MCF 10A (cell line): ENCODE measurements at regions of chr4 and their contacts with region 1.

Region 1: GRCh38 chr4:15457406-15458201 is 12.1 kb upstream of the CC2D2A start:
- DNase-seq: peak; percentile 44
- H3K4me3 Mint-ChIP-seq: no peak overlapping the region
- H3K27ac Mint-ChIP-seq: no peak overlapping the region
- H3K4me1 Mint-ChIP-seq: peaks cover 8% of the 10 kb centered on the region
- H3K27me3 Mint-ChIP-seq: peaks cover 18% of the 10 kb centered on the region
- CTCF ChIP-seq: peak; percentile 60

Region 2: DNA sequence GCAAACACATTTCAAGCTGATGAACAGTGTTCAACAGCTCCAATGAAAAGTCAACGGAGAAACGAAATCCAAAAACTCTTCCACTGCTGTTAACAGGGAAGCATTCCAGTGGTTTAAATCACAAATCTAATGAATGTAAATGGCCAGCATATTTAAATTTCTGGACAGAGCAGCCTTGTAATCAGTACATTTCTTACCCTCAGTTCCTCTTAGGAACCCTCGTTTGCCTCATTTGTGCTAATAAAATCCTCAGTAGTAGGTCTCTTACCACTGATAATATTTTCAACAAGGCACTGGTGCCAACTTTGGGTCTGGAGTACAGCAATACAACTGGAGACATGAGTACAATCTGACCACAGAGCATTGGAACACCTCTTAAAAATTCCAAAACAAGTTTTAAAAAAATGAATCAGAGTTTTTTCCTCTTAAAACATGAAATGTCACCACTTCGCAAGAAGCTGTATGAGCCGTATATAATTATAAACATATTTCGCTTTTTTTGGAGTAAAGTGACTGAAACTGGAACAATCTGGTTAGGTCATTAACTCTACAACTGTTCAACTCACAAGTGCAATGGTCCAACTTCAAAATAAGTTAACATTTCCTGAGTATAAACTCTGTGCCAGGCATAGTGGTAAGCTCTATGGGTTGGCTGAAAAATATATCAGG is 244.2 kb before region 1 on chr4:
- CTCF ChIA-PET with region 1: no interaction called
- POLR2A ChIA-PET with region 1: no interaction called
- intact Hi-C with region 1: no loop called
- DNase-seq: no peak
- H3K4me3 Mint-ChIP-seq: no peak overlapping the region
- H3K27ac Mint-ChIP-seq: no peak overlapping the region
- H3K4me1 Mint-ChIP-seq: no peaks in the 10 kb centered on the region
- H3K27me3 Mint-ChIP-seq: no peaks in the 10 kb centered on the region
- CTCF ChIP-seq: no peak

Region 3: GRCh38 chr4:15238720-15239119 is 218.9 kb before region 1 on chr4:
- CTCF ChIA-PET with region 1: interaction called, 122 read pairs
- POLR2A ChIA-PET with region 1: interaction called, 8 read pairs
- intact Hi-C with region 1: loop called (anchors 1 kb)
- DNase-seq: peak; percentile 62
- H3K4me3 Mint-ChIP-seq: no peak overlapping the region
- H3K27ac Mint-ChIP-seq: no peak overlapping the region
- H3K4me1 Mint-ChIP-seq: peaks cover 26% of the 10 kb centered on the region
- H3K27me3 Mint-ChIP-seq: no peaks in the 10 kb centered on the region
- CTCF ChIP-seq: peak; percentile 67

Region 4: DNA sequence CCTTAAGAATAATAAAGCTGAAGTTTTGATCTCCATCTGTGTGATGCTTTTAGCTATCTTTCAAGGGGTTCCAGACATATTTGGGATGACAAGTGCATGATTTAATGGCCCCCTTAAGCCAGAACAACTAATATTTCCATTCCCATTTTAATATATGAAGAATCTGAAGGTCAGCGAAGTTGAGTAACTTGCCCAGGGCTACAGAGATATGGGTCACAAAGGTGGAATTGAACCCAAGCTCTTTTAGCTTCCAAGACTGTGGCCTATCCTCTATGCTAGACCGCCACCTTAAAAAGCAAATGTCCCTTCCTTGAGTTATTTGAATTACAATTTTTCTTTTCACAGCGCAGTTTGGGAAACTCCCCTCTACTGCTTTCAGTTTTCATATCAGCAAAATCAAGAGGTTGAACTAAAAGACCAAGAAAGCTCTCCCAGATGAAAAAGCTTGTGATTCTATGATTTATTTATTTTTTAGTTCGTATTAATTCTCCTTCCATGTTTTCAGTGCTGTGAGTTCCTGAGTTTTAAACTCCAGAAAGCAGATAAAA is 204.3 kb before region 1 on chr4:
- CTCF ChIA-PET with region 1: interaction called, 17 read pairs
- POLR2A ChIA-PET with region 1: no interaction called
- intact Hi-C with region 1: no loop called
- DNase-seq: no peak
- H3K4me3 Mint-ChIP-seq: no peak overlapping the region
- H3K27ac Mint-ChIP-seq: no peak overlapping the region
- H3K4me1 Mint-ChIP-seq: no peaks in the 10 kb centered on the region
- H3K27me3 Mint-ChIP-seq: no peaks in the 10 kb centered on the region
- CTCF ChIP-seq: no peak

Region 5: GRCh38 chr4:15427161-15427560 is 30.4 kb before region 1 on chr4:
- CTCF ChIA-PET with region 1: interaction called, 21 read pairs
- POLR2A ChIA-PET with region 1: interaction called, 3 read pairs
- intact Hi-C with region 1: no loop called
- DNase-seq: no peak
- H3K4me3 Mint-ChIP-seq: no peak overlapping the region
- H3K27ac Mint-ChIP-seq: no peak overlapping the region
- H3K4me1 Mint-ChIP-seq: peaks cover 27% of the 10 kb centered on the region
- H3K27me3 Mint-ChIP-seq: no peaks in the 10 kb centered on the region
- CTCF ChIP-seq: no peak